ENCODE measurements at regions of chr5 and their contacts with region 1.

Region 1: DNA sequence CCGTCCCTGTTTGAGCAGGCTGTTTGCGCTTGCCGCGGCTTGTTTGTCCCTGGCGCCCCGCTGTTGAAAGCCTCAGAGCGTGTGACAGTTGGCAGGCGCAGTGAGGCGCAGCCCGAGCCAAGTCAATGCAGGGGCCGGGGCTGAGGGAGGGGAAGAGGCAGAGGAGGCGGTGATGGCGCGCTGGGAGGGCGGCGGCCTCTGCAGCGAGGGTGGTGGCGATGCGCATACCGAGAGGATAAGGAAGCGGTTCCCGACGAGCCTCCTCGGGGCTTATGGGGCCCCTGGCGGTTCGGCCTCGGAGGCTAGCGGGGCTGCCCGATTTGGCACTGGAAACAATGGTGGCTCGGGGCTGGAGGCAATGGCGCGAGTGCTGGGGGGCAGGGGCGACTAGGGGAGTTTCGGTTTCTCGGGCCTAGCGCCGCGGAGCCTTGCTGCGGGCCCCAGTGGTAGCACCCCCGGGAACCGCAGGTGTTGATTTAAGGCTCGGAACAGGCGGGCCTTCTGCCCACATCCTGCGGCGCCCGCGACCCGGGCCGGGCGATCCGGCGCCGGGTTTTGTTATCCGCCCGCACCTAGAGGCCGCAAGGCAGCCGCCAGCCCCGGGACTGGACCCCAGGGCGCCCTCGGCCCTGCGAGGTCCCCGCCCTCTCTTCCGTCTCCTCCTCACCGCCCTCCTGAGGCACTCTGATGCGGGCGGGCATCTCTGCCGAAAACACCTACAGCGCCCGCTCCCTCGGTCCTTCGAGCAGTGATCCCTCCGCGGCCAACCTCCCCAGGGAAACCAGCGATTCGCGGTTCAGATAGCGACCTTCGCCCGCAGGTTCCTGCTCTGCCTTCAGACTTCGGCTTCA is 947 bp upstream of the LNPEP start:
- DNase-seq: peak; percentile 97
- ATAC-seq: peak; percentile 74
- H3K4me3 ChIP-seq: peak overlapping the region; percentile 76
- H3K27ac ChIP-seq: peak overlapping the region; percentile 86
- H3K4me1 ChIP-seq: peaks cover 35% of the 10 kb centered on the region
- H3K27me3 ChIP-seq: no peaks in the 10 kb centered on the region
- CTCF ChIP-seq: no peak

Region 2: DNA sequence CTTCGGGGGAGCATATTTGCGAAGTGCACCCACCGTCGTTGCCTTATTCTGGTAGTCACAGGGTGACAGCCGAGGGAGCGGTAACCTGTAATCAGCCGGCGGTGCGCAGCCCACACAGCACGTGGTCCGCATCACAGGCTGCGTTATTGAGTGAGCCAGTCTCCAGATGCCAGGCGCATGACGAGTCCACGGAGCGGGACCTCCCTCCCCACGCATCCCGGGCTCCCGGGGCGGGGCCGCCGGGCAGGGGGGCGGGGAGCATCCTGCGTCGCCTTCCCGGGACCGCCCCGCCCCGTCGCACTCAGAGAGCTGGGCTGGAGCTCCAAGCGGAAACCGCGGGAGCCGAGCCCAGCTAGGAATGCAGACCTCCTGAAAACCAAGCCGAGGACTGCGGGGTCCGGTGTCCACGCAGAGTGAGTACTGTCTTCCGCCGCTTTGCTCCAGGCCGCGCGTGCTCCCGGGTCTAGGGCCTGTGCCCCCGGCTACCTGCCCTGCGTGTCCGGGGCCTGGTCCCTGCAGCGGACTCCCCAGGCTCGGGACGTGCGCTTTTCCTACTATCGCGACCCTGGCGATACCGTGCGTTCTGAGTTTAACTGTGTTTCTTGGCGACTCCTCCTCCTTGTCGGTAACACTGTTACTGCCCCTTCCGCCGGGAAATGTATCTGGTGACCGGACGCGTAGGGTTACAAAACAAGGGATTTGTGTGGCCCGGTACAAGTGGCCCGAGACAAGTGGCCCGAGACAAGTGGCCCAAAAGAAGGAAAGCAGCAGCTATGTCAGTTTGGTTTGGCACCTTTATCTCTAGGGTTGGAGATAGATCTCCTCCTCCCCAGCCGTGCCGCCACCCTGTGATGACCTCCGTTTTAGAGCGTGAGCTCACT is 232.2 kb before region 1 on chr5:
- CTCF ChIA-PET with region 1: no interaction called
- POLR2A ChIA-PET with region 1: no interaction called
- intact Hi-C with region 1: no loop called
- DNase-seq: no peak
- ATAC-seq: no peak
- H3K4me3 ChIP-seq: no peak overlapping the region
- H3K27ac ChIP-seq: no peak overlapping the region
- H3K4me1 ChIP-seq: peaks cover 16% of the 10 kb centered on the region
- H3K27me3 ChIP-seq: no peaks in the 10 kb centered on the region
- CTCF ChIP-seq: no peak

Region 3: GRCh38 chr5:96781031-96781937 is 153.6 kb before region 1 on chr5:
- CTCF ChIA-PET with region 1: no interaction called
- POLR2A ChIA-PET with region 1: no interaction called
- intact Hi-C with region 1: loop called (anchors 5 kb)
- DNase-seq: peak; percentile 88
- ATAC-seq: peak; percentile 85
- H3K4me3 ChIP-seq: no peak overlapping the region; the same call in 1 of the 2 replicates
- H3K27ac ChIP-seq: peak overlapping the region; percentile 58
- H3K4me1 ChIP-seq: peaks cover 22% of the 10 kb centered on the region
- H3K27me3 ChIP-seq: no peaks in the 10 kb centered on the region
- CTCF ChIP-seq: no peak

Region 4: DNA sequence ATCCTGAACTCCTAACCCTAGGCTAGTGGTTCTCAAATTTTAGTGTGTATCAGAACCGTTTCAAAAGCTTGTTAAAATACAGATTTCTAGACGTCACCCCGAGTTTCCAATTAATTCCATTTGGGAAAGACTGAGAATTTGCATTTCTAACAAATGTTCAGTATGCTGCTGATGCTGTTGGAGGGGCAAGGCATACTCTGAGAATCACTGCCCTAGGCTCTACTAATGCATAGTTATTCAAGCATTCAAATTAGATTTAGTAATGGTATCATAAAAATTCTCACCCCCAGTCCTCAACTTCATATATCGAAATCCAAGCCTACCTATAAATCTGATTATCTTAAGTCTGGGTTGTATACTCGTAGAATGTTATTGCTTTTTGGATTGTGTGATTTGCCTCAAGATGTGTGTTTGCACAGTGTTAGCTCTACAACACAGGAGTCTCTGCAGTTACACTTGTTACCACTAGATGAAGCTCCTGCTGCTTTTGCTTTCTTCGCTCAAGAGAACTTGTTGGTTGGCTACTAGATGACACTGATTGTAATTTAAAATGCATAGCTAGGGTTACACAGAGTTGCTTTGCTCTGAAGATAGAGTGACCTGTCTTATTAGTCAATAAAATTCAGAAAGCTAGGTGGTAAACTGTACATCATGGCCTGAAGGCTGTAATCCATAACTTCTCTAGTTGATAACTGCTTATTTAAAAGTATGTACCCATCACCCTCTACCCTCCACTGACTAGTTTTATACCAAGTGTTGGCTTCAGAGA is 66.1 kb before region 1 on chr5:
- CTCF ChIA-PET with region 1: interaction called, 18 read pairs
- POLR2A ChIA-PET with region 1: interaction called, 4 read pairs
- intact Hi-C with region 1: loop called (anchors 1 kb)
- DNase-seq: peak; percentile 76
- ATAC-seq: peak; percentile 97
- H3K4me3 ChIP-seq: no peak overlapping the region
- H3K27ac ChIP-seq: no peak overlapping the region
- H3K4me1 ChIP-seq: peaks cover 7% of the 10 kb centered on the region; the same call in 1 of the 2 replicates
- H3K27me3 ChIP-seq: no peaks in the 10 kb centered on the region
- CTCF ChIP-seq: peak; percentile 94

Region 5: DNA sequence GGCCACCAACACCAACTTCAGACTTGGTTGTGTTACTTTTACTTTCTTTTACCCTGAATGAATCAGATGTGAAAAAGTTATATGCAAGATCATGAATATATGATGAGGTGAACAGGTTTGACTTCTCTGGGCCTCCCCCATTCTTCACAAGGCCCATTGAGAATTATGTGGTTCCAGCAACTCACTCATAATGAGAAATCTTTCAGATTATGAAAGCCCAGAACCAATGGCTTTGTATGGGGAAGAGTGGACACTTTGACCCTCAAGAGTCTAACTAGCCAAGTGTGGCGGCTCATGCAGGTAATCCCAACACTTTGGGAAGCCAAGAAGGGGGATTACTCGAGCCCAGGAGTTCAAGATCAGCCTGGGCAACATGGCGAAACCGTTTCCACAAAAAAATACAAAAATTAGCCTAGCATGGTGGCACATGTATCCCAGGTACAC is 15.2 kb before region 1 on chr5:
- CTCF ChIA-PET with region 1: no interaction called
- POLR2A ChIA-PET with region 1: no interaction called
- intact Hi-C with region 1: loop called (anchors 1 kb)
- DNase-seq: no peak
- ATAC-seq: no peak
- H3K4me3 ChIP-seq: no peak overlapping the region
- H3K27ac ChIP-seq: no peak overlapping the region
- H3K4me1 ChIP-seq: peaks cover 18% of the 10 kb centered on the region
- H3K27me3 ChIP-seq: no peaks in the 10 kb centered on the region
- CTCF ChIP-seq: no peak

Region 6: DNA sequence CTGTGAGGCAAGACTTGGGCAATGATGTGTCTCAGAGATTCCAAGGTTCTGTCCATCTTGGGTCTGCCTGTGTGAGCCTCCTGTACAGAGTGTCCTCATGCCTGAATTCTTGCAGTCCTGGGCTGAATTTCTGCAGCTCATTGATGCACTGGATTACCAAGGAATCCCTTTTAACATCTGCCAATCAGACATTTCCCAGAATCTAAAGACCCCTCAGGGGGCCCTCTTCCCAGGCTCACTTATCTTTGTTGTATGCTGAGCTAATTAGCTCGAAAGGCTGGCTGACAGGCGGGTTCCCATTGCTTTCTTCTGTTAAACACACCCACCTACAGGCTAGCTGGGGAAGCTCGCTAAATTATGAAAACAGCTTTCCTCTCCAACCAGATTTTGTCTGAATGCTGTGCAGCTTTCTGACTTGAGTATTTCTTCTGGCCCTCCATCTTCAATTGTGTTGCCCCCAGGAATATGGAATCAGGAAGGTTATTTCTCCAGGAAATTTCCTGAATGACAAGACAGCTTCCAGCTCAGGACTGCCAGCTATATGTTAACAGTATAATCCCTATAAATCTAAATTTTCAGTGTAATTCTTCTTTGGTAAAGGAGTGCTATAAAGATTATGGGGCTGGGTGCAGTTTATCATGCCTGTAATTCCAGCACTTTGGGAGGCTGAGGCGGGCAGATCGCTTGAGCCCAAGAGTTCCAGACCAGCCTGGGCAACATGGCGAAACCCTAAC is 207.8 kb after region 1 on chr5 and contains the start of gene LIX1:
- CTCF ChIA-PET with region 1: no interaction called
- POLR2A ChIA-PET with region 1: no interaction called
- intact Hi-C with region 1: loop called (anchors 2 kb)
- DNase-seq: peak; percentile 63
- ATAC-seq: peak; percentile 87
- H3K4me3 ChIP-seq: no peak within 1 kb of the TSS
- H3K27ac ChIP-seq: no peak within 1 kb of the TSS
- H3K4me1 ChIP-seq: no peaks in the 10 kb centered on the region
- H3K27me3 ChIP-seq: no peaks in the 10 kb centered on the region
- CTCF ChIP-seq: peak; percentile 82
- total RNA-seq, gene LIX1: not detected in 2 replicates